Dorsolateral prefrontal cortex (tissue), 120 donors: ENCODE measurements at regions of chr2 and their contacts with region 1.

Region 1: DNA sequence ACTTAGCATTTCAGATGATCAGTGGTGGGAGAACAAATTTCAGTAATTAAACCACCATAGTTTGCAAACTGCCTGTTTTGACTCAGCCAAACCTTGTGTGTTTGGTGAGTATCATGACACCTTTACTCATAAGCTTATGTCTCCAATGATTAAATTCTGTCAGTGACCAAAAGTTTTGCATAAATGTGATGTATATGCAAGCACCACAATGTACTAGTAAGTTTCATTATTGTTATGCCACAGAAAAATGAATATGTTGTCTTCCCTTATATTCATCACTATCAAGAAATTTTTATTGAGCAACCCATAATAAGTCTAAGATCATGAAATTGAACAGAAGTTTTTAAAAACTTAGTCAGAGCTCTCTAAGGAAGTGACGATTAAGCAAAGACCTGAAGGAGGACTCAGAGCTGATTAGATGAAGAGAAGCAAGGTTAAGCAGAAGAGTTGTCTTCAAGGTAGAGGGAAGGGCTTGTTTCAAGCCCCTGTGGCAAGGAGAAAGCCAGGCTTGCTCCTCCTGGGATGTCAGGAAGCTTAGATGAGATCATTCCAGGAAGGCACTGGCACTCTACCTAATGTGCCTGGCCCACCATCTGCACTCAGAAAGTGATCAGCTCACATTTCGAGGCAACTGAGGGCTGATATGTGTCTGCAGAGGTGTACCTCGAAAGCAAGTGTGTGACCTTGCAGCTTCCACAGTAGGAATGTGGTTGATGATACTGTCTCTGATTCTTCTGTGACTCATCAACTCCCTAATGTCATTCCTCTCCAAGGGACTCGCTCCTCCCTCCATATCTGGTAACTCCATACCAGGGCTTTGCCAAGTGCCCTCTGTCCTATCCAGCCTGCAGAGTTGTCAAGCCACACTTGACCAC is 54.7 kb downstream of the KCTD18 start:
- DNase-seq: no peak
- H3K4me3 ChIP-seq: no peak overlapping the region
- H3K27ac ChIP-seq: peak overlapping the region in 44 of 59 donors; percentile 10 to 89 (median 75)
- H3K27me3 ChIP-seq: no peaks in the 10 kb centered on the region
- CTCF ChIP-seq: no peak

Region 2: GRCh38 chr2:200396781-200397242 is 58.4 kb before region 1 on chr2:
- intact Hi-C with region 1: loop called in 1 of 2 experiments (anchors 10 kb)
- DNase-seq: no peak
- H3K4me3 ChIP-seq: peak overlapping the region in 33 of 59 donors; percentile 2 to 37 (median 16)
- H3K27ac ChIP-seq: peak overlapping the region in 42 of 59 donors; percentile 7 to 78 (median 43)
- H3K27me3 ChIP-seq: no peaks in the 10 kb centered on the region
- CTCF ChIP-seq: no peak